Caco-2 (cell line): ENCODE measurements at regions of chr15 and their contacts with region 1.

Region 1: DNA sequence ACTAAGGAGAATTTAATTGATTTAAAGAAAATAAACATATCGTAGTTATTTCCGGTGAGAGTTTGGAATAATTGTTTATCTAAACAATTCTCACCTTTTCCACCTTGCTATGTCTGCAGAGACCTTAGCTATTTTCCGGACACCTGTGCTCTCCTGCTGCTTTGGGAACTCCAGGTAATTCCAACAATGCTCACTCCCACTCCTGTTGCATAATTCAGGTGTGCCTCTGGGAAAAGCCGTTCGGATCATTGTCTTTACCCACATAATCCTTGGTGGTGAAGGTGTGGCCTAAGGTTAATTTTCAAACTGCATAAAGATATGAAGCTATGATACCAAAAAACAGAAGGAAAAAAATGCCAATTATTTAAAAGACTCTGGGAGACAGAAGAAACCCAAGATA is 59.4 kb downstream of the LDHAL6B start:
- DNase-seq: peak; percentile 71 to 79
- H3K4me3 ChIP-seq: no peak overlapping the region
- H3K4me3 Mint-ChIP-seq: peak overlapping the region; percentile 57
- H3K27ac Mint-ChIP-seq: peak overlapping the region; percentile 53
- H3K4me1 ChIP-seq: peaks cover 50% of the 10 kb centered on the region
- H3K4me1 Mint-ChIP-seq: peaks cover 13% of the 10 kb centered on the region
- H3K27me3 ChIP-seq: no peaks in the 10 kb centered on the region
- H3K27me3 Mint-ChIP-seq: no peaks in the 10 kb centered on the region
- CTCF ChIP-seq: no peak

Region 2: GRCh38 chr15:58856086-58856485 is 409.9 kb before region 1 on chr15:
- CTCF ChIA-PET with region 1: no interaction called
- POLR2A ChIA-PET with region 1: no interaction called
- intact Hi-C with region 1: no loop called
- DNase-seq: no peak
- H3K4me3 ChIP-seq: no peak overlapping the region
- H3K4me3 Mint-ChIP-seq: no peak overlapping the region
- H3K27ac Mint-ChIP-seq: no peak overlapping the region
- H3K4me1 ChIP-seq: no peaks in the 10 kb centered on the region
- H3K4me1 Mint-ChIP-seq: no peaks in the 10 kb centered on the region
- H3K27me3 ChIP-seq: no peaks in the 10 kb centered on the region
- H3K27me3 Mint-ChIP-seq: no peaks in the 10 kb centered on the region
- CTCF ChIP-seq: no peak

Region 3: DNA sequence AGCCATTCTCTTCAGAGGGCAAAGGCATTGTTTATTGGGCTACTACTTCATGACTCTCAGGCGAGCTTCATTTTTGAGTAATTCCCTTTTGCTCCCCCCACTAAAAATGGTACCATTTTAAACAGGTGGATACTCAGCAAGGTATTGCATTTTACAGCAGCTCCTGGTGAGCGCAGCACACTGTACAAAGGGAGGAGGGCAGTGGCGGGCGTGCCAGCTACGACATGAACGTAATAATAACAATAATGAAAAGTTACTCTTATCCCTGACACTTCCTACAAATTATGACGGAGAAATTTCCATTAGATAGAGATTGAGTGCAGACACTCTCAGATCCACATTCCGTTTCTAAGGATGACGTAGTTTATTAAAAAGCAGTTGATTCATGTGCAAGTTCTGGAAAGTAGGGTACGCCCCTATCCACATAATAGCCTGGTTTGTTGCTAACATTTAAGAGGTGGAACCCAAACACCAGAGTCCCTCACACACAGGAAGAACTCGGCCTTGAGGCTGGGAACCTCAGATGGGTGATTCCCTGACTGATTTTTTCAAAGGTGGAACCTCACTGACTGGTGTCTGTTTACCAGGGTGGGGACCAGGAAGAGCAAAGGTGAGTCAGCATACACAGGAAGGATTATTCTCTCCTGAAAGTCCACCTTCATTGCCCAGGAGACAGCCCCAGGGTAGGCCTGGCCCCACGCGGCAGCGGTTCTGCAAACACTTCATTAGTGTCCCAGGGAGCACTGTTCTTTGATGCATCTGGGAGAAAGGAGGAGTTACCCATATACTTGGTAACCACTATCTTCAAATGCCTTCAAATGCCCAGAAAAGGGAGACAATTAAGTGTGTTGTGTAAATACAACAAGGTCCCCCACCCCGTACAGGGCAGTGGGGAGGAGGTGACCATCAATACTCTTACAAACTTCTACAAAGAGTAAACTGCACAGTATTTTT is 10.5 kb after region 1 on chr15:
- CTCF ChIA-PET with region 1: no interaction called
- POLR2A ChIA-PET with region 1: no interaction called
- intact Hi-C with region 1: loop called (anchors 1 kb)
- DNase-seq: peak; percentile 81 to 91
- H3K4me3 ChIP-seq: no peak overlapping the region
- H3K4me3 Mint-ChIP-seq: peak overlapping the region; percentile 58
- H3K27ac Mint-ChIP-seq: peak overlapping the region; percentile 87
- H3K4me1 ChIP-seq: peaks cover 62% of the 10 kb centered on the region
- H3K4me1 Mint-ChIP-seq: peaks cover 47% of the 10 kb centered on the region
- H3K27me3 ChIP-seq: no peaks in the 10 kb centered on the region
- H3K27me3 Mint-ChIP-seq: no peaks in the 10 kb centered on the region
- CTCF ChIP-seq: no peak

Region 4: GRCh38 chr15:59360305-59360704 is 94.3 kb after region 1 on chr15:
- CTCF ChIA-PET with region 1: no interaction called
- POLR2A ChIA-PET with region 1: no interaction called
- intact Hi-C with region 1: no loop called
- DNase-seq: no peak
- H3K4me3 ChIP-seq: no peak overlapping the region
- H3K4me3 Mint-ChIP-seq: no peak overlapping the region
- H3K27ac Mint-ChIP-seq: no peak overlapping the region
- H3K4me1 ChIP-seq: 0 out of 2 replicates have a peak, but pooled peaks cover under 1% of the 10 kb centered on the region
- H3K4me1 Mint-ChIP-seq: peaks cover 2% of the 10 kb centered on the region
- H3K27me3 ChIP-seq: no peaks in the 10 kb centered on the region
- H3K27me3 Mint-ChIP-seq: no peaks in the 10 kb centered on the region
- CTCF ChIP-seq: peak in 1 of 2 experiments; percentile 36